ENCODE measurements at regions of chr5 and their contacts with region 1.

Region 1: GRCh38 chr5:154072414-154073171 is 33.8 kb downstream of the MFAP3 start:
- DNase-seq: peak; percentile 67 to 90 (median 84)
- ATAC-seq: peak; percentile 93
- H3K4me3 ChIP-seq: no peak overlapping the region
- H3K4me3 Mint-ChIP-seq: peak overlapping the region; percentile 49
- H3K27ac ChIP-seq: no peak overlapping the region
- H3K27ac Mint-ChIP-seq: no peak overlapping the region
- H3K4me1 ChIP-seq: peaks cover 10% of the 10 kb centered on the region
- H3K4me1 Mint-ChIP-seq: peaks cover 12% of the 10 kb centered on the region
- H3K27me3 ChIP-seq: no peaks in the 10 kb centered on the region
- H3K27me3 Mint-ChIP-seq: peaks cover 3% of the 10 kb centered on the region
- CTCF ChIP-seq: peak; percentile 97

Region 2: GRCh38 chr5:154049636-154050035 is 23.0 kb before region 1 on chr5:
- CTCF ChIA-PET with region 1: interaction called, 35 read pairs
- POLR2A ChIA-PET with region 1: no interaction called
- intact Hi-C with region 1: no loop called
- DNase-seq: no peak
- ATAC-seq: no peak
- H3K4me3 ChIP-seq: no peak overlapping the region
- H3K4me3 Mint-ChIP-seq: no peak overlapping the region
- H3K27ac ChIP-seq: no peak overlapping the region
- H3K27ac Mint-ChIP-seq: no peak overlapping the region
- H3K4me1 ChIP-seq: no peaks in the 10 kb centered on the region
- H3K4me1 Mint-ChIP-seq: peaks cover 47% of the 10 kb centered on the region
- H3K27me3 ChIP-seq: no peaks in the 10 kb centered on the region
- H3K27me3 Mint-ChIP-seq: no peaks in the 10 kb centered on the region
- CTCF ChIP-seq: no peak

Region 3: GRCh38 chr5:154084062-154084639 is 11.6 kb after region 1 on chr5:
- CTCF ChIA-PET with region 1: interaction called, 23 read pairs
- POLR2A ChIA-PET with region 1: no interaction called
- intact Hi-C with region 1: no loop called
- DNase-seq: no peak
- ATAC-seq: no peak
- H3K4me3 ChIP-seq: no peak overlapping the region
- H3K4me3 Mint-ChIP-seq: no peak overlapping the region
- H3K27ac ChIP-seq: no peak overlapping the region
- H3K27ac Mint-ChIP-seq: no peak overlapping the region
- H3K4me1 ChIP-seq: no peaks in the 10 kb centered on the region
- H3K4me1 Mint-ChIP-seq: no peaks in the 10 kb centered on the region
- H3K27me3 ChIP-seq: no peaks in the 10 kb centered on the region
- H3K27me3 Mint-ChIP-seq: peaks cover 4% of the 10 kb centered on the region
- CTCF ChIP-seq: no peak

Region 4: GRCh38 chr5:154189819-154190594 is 117.4 kb after region 1 on chr5:
- CTCF ChIA-PET with region 1: interaction called, 6 read pairs
- POLR2A ChIA-PET with region 1: interaction called, 4 read pairs
- intact Hi-C with region 1: loop called in 1 of 2 experiments (anchors 2 kb)
- DNase-seq: peak; percentile 65 to 93 (median 82)
- ATAC-seq: peak; percentile 81
- H3K4me3 ChIP-seq: peak overlapping the region; percentile 86 to 89
- H3K4me3 Mint-ChIP-seq: peak overlapping the region; percentile 82
- H3K27ac ChIP-seq: peak overlapping the region; percentile 60 to 72
- H3K27ac Mint-ChIP-seq: peak overlapping the region; percentile 81
- H3K4me1 ChIP-seq: peaks cover 26% of the 10 kb centered on the region
- H3K4me1 Mint-ChIP-seq: peaks cover 36% of the 10 kb centered on the region
- H3K27me3 ChIP-seq: no peaks in the 10 kb centered on the region
- H3K27me3 Mint-ChIP-seq: no peaks in the 10 kb centered on the region
- CTCF ChIP-seq: peak; percentile 57

Region 5: DNA sequence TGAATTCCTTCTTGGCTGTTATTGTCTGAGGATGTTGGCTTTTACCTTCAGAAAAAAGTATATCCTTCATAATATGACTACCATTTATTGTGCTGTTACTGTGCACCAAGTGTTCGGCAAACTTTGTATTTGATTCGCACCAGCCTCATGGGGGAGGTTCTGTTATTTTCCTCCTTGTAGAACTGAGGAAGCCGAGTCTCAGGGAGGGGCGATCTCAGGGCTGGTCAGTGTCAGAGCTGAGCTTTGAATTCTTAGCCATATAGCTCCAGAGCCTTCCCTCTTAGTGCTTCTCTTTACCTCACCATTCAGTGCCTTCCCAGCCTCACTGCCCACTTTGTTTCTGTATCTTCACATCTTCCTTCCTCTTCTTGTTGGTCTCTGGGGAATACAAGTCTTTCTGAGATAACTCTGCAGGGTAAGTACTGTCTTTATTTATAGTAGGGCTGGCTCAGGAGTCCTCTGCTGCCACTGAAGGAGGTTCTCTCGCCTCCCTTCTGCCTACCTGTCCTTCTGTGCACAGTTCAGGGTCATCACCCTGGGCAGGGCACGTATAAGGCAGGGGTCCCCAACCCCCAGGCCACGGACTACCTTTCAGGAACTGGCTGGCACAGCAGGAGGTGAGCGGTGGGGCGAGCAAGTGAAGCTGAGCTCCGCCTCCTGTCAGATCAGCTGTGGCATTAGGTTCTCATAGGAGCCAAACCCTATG is 166.3 kb after region 1 on chr5:
- CTCF ChIA-PET with region 1: interaction called, 4 read pairs
- POLR2A ChIA-PET with region 1: no interaction called
- intact Hi-C with region 1: loop called in 1 of 2 experiments (anchors 1 kb)
- DNase-seq: no peak
- ATAC-seq: no peak
- H3K4me3 ChIP-seq: no peak overlapping the region
- H3K4me3 Mint-ChIP-seq: no peak overlapping the region
- H3K27ac ChIP-seq: no peak overlapping the region
- H3K27ac Mint-ChIP-seq: no peak overlapping the region
- H3K4me1 ChIP-seq: peaks cover 4% of the 10 kb centered on the region
- H3K4me1 Mint-ChIP-seq: peaks cover 42% of the 10 kb centered on the region
- H3K27me3 ChIP-seq: no peaks in the 10 kb centered on the region
- H3K27me3 Mint-ChIP-seq: no peaks in the 10 kb centered on the region
- CTCF ChIP-seq: no peak

Region 6: DNA sequence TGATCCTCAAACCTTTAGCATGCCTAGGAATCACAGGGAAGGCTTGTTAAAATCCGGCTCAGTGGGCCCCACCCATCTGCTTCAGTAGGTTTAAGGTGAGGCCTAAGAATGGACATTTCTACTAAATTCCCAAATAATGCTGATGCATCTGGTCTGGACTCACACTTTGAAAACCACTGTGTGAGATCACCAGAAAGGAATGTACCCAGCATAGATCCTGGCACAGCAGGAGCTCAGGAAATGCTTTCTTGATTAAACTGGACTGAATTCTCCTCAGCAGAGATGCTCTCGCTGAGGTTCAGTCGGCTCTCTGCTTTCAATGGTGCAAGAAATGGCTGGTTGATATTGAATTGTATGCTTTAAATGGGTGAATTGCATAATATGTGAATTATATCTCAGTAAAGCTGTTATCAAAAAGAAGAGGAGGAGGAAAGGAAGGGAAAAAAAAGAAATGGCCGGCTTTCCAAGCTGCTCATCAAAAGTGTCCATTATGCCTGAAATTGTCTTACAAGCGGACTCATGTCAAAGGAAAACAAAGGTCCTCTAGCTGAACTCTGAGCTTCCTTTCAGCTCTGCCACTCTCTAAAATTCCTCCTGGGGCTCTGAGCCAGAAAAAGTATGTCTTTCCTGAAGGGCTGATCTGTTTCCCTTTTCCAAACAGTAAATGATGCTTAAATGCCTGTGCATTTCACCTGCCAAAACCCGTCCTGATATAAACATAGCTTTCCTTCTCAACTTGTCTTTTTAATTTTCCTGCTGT is 295.6 kb after region 1 on chr5:
- CTCF ChIA-PET with region 1: no interaction called
- POLR2A ChIA-PET with region 1: no interaction called
- intact Hi-C with region 1: no loop called
- DNase-seq: no peak
- ATAC-seq: no peak
- H3K4me3 ChIP-seq: no peak overlapping the region
- H3K4me3 Mint-ChIP-seq: no peak overlapping the region
- H3K27ac ChIP-seq: no peak overlapping the region
- H3K27ac Mint-ChIP-seq: no peak overlapping the region
- H3K4me1 ChIP-seq: no peaks in the 10 kb centered on the region
- H3K4me1 Mint-ChIP-seq: no peaks in the 10 kb centered on the region
- H3K27me3 ChIP-seq: no peaks in the 10 kb centered on the region
- H3K27me3 Mint-ChIP-seq: no peaks in the 10 kb centered on the region
- CTCF ChIP-seq: no peak

Region 7: DNA sequence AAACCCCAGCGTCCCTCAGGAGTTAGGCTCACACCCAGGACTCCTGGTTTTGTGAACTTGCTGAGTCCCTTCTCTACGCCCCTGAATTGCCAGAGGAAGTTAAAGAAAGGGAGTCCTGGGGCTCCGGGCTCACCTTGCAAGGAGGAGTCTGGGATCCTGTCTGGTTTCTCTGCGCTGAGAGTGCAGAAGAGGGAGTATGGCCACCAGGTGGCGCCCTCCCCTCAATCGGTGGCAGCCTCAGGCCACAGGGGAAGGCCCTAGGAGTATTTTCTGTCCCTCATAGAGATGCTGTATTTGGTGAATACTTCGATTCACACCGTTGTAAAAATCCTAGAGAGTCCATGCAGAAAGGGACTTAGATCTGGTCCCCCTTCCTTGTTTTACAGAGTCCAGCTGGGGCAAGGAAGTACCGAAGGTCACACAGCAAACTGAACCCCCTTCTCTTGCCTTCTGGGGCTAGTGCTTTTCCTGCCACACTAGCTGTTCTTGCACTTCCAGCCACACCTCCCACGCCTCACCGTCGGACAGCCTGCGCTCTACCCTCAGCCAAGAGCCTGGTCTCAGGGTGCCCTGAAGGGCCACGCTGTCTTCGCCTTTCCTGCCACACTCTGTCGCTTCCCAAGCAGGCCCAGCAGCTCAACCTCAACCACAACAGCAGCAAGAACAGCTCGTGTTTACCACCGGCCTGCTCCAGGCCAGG is 395.2 kb after region 1 on chr5:
- CTCF ChIA-PET with region 1: interaction called, 6 read pairs
- POLR2A ChIA-PET with region 1: no interaction called
- intact Hi-C with region 1: loop called in 1 of 2 experiments (anchors 5 kb)
- DNase-seq: peak; percentile 39 to 80 (median 74)
- ATAC-seq: peak; percentile 80
- H3K4me3 ChIP-seq: no peak overlapping the region
- H3K4me3 Mint-ChIP-seq: no peak overlapping the region
- H3K27ac ChIP-seq: no peak overlapping the region
- H3K27ac Mint-ChIP-seq: no peak overlapping the region
- H3K4me1 ChIP-seq: no peaks in the 10 kb centered on the region
- H3K4me1 Mint-ChIP-seq: peaks cover 9% of the 10 kb centered on the region
- H3K27me3 ChIP-seq: peaks cover 9 to 14% of the 10 kb centered on the region in 2 experiments
- H3K27me3 Mint-ChIP-seq: peaks cover 36% of the 10 kb centered on the region
- CTCF ChIP-seq: peak; percentile 81